GM12878 (cell line): ENCODE measurements at regions of chr7 and their contacts with region 1.

Region 1: GRCh38 chr7:98795741-98796493 is 73.9 kb downstream of the TMEM130 start:
- DNase-seq: peak; percentile 77
- ATAC-seq: peak; percentile 96
- H3K4me3 ChIP-seq: no peak overlapping the region
- H3K27ac ChIP-seq: peak overlapping the region; percentile 83
- H3K4me1 ChIP-seq: peaks cover 21% of the 10 kb centered on the region
- H3K27me3 ChIP-seq: no peaks in the 10 kb centered on the region
- CTCF ChIP-seq: no peak
- EP300 ChIP-seq: peak in 1 of 2 experiments; percentile 77; a peak in 2 of 4 replicates
- POLR2A ChIP-seq: no peak
- RAD21 ChIP-seq: no peak

Region 2: GRCh38 chr7:98641646-98642500 is 154.0 kb before region 1 on chr7:
- CTCF ChIA-PET with region 1: no interaction called
- POLR2A ChIA-PET with region 1: no interaction called
- RAD21 ChIA-PET with region 1: no interaction called
- SMC1A ChIA-PET with region 1: no interaction called
- in situ Hi-C with region 1: no loop called
- intact Hi-C with region 1: loop called (anchors 5 kb)
- DNase-seq: peak; percentile 87
- ATAC-seq: peak; percentile 84
- H3K4me3 ChIP-seq: peak overlapping the region; percentile 28; the same call in 1 of the 2 replicates
- H3K27ac ChIP-seq: peak overlapping the region; percentile 59
- H3K4me1 ChIP-seq: peaks cover 26% of the 10 kb centered on the region
- H3K27me3 ChIP-seq: no peaks in the 10 kb centered on the region
- CTCF ChIP-seq: no peak
- EP300 ChIP-seq: peak in 1 of 2 experiments; percentile 63; a peak in 2 of 4 replicates
- POLR2A ChIP-seq: no peak
- RAD21 ChIP-seq: no peak